GM12878 (cell line): ENCODE measurements at regions of chr3 and their contacts with region 1.

Region 1: DNA sequence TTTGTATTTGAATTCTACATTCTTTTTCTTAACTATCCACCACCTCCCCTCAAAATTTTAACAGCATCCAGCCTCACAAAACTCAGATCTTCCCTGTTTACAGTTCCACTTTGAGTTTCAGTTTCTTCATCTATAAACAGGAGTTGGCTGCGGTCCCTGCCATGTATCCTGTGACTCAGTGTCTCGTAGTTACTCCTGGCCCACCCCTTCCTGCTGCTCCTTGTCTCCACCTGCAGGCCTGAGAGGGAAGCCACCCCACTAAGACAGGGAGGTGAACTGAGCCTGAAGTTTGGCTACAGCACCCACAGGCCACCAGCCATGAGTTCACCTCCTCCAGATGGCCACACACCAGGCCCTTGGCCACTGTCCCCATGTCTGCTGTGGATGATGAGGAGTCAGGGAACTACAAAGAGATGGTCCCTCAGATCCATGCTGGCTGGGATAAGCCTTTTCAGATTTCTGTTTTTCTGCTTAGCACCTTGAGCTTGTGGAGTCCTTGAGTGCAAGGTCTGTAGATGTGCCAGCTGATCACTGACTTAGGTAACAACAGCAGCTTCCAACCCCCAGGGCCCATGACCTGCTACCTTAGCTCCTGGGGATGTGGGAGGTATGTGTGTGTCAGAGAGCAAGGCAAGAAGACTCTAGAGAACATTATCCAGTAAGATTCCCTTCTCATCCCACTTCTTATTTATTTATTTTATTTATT is 37.5 kb downstream of the CD86 start:
- DNase-seq: no peak
- ATAC-seq: peak; percentile 80
- H3K4me3 ChIP-seq: no peak overlapping the region; the same call in 1 of the 2 replicates
- H3K27ac ChIP-seq: peak overlapping the region; percentile 59
- H3K4me1 ChIP-seq: peaks cover 59% of the 10 kb centered on the region
- H3K27me3 ChIP-seq: no peaks in the 10 kb centered on the region
- CTCF ChIP-seq: peak; percentile 60 to 84 (median 80)
- EP300 ChIP-seq: no peak
- POLR2A ChIP-seq: no peak
- RAD21 ChIP-seq: peak; percentile 76

Region 2: DNA sequence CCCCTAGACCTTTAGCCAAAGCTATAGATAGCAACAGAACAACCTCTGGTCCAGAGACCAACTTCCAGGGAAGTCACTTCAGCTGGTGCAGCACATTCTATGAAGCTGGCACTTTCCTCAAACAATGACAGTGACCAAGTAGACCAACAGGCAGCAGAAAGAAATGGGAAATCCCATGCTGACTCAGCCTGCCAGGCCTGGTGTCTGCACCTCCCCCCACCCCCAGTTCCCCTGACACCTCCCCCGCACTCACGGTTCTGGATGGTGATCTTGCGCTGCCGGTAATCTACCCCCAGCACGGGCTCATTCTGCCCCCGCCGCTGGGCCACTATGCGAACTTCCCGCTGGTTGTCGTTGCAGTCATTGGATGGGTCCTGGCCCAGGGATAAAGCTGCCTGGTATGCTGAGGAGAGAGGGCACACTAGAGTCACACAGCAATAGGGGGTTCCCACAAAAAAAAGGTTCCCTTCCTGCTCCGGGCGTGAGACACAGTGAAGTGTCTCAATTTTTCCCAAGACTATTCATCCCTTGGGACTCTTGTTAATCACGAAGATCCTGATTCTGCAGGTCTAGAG is 87.5 kb before region 1 on chr3:
- CTCF ChIA-PET with region 1: interaction called, 6 read pairs
- POLR2A ChIA-PET with region 1: interaction called, 16 read pairs
- RAD21 ChIA-PET with region 1: interaction called, 13 read pairs
- SMC1A ChIA-PET with region 1: interaction called, 882 read pairs
- in situ Hi-C with region 1: no loop called
- intact Hi-C with region 1: no loop called
- DNase-seq: peak; percentile 74
- ATAC-seq: peak; percentile 78
- H3K4me3 ChIP-seq: peak overlapping the region; percentile 46; the same call in 1 of the 2 replicates
- H3K27ac ChIP-seq: peak overlapping the region; percentile 91
- H3K4me1 ChIP-seq: peaks cover 58% of the 10 kb centered on the region
- H3K27me3 ChIP-seq: no peaks in the 10 kb centered on the region
- CTCF ChIP-seq: 0 out of 6 replicates have a peak, but pooled peaks of 1 of the 3 experiments have one; percentile 3
- EP300 ChIP-seq: peak; percentile 11 to 65; a peak in 3 of 4 replicates
- POLR2A ChIP-seq: 0 out of 2 replicates have a peak, but pooled peaks have one; percentile 35
- RAD21 ChIP-seq: no peak

Region 3: GRCh38 chr3:122021811-122022401 is 70.7 kb before region 1 on chr3 and contains the start of gene ILDR1:
- CTCF ChIA-PET with region 1: interaction called, 16 read pairs
- POLR2A ChIA-PET with region 1: interaction called, 13 read pairs
- RAD21 ChIA-PET with region 1: interaction called, 70 read pairs
- SMC1A ChIA-PET with region 1: interaction called, 66 read pairs
- in situ Hi-C with region 1: no loop called
- intact Hi-C with region 1: no loop called
- DNase-seq: no peak
- ATAC-seq: peak; percentile 55
- H3K4me3 ChIP-seq: peak within 1 kb of the TSS; percentile 72
- H3K27ac ChIP-seq: peak within 1 kb of the TSS; percentile 65
- H3K4me1 ChIP-seq: peaks cover 49% of the 10 kb centered on the region
- H3K27me3 ChIP-seq: no peaks in the 10 kb centered on the region
- CTCF ChIP-seq: no peak
- EP300 ChIP-seq: no peak
- POLR2A ChIP-seq: peak; percentile 60; the same call in 1 of the 2 replicates
- RAD21 ChIP-seq: no peak
- polyA plus RNA-seq, gene ILDR1: 1.3 to 1.8 TPM

Region 4: DNA sequence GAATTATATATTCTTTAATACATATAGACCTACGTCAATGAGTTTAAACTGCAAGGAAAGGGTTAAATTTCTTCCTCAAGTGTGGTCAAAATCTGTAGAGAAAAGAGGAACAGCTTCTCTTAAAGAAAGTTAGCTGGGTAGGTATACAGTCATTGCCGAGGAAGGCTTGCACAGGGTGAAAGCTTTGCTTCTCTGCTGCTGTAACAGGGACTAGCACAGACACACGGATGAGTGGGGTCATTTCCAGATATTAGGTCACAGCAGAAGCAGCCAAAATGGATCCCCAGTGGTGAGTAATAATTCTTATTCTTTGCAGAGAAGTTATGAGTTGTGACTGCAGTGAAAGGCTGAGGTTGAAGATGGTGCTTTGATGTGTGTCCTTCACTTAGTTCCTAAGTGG is 37.4 kb before region 1 on chr3 and contains the start of gene CD86:
- CTCF ChIA-PET with region 1: interaction called, 5 read pairs
- POLR2A ChIA-PET with region 1: no interaction called
- RAD21 ChIA-PET with region 1: interaction called, 6 read pairs
- SMC1A ChIA-PET with region 1: interaction called, 394 read pairs
- in situ Hi-C with region 1: no loop called
- intact Hi-C with region 1: no loop called
- DNase-seq: peak; percentile 77
- ATAC-seq: peak; percentile 92
- H3K4me3 ChIP-seq: peak within 1 kb of the TSS; percentile 61
- H3K27ac ChIP-seq: peak within 1 kb of the TSS; percentile 45
- H3K4me1 ChIP-seq: peaks cover 13% of the 10 kb centered on the region
- H3K27me3 ChIP-seq: no peaks in the 10 kb centered on the region
- CTCF ChIP-seq: no peak
- EP300 ChIP-seq: peak in 1 of 2 experiments; percentile 68; a peak in 1 of 4 replicates
- POLR2A ChIP-seq: peak; percentile 79
- RAD21 ChIP-seq: peak; percentile 14; the same call in 1 of the 2 replicates
- polyA plus RNA-seq, gene CD86: 68.0 to 79.5 TPM

Region 5: GRCh38 chr3:122074621-122075265 is 17.9 kb before region 1 on chr3:
- CTCF ChIA-PET with region 1: interaction called, 114 read pairs
- POLR2A ChIA-PET with region 1: interaction called, 165 read pairs
- RAD21 ChIA-PET with region 1: interaction called, 426 read pairs
- SMC1A ChIA-PET with region 1: interaction called, 604 read pairs
- in situ Hi-C with region 1: no loop called
- intact Hi-C with region 1: no loop called
- DNase-seq: peak; percentile 92
- ATAC-seq: peak; percentile 70
- H3K4me3 ChIP-seq: peak overlapping the region; percentile 72
- H3K27ac ChIP-seq: peak overlapping the region; percentile 97
- H3K4me1 ChIP-seq: peaks cover 45% of the 10 kb centered on the region
- H3K27me3 ChIP-seq: no peaks in the 10 kb centered on the region
- CTCF ChIP-seq: no peak
- EP300 ChIP-seq: peak; percentile 65 to 76
- POLR2A ChIP-seq: peak; percentile 73
- RAD21 ChIP-seq: no peak

Region 6: GRCh38 chr3:122233101-122233952 is 140.7 kb after region 1 on chr3:
- CTCF ChIA-PET with region 1: interaction called, 7 read pairs
- POLR2A ChIA-PET with region 1: interaction called, 4 read pairs
- RAD21 ChIA-PET with region 1: interaction called, 9 read pairs
- SMC1A ChIA-PET with region 1: interaction called, 10 read pairs
- in situ Hi-C with region 1: no loop called
- intact Hi-C with region 1: no loop called
- DNase-seq: peak; percentile 86
- ATAC-seq: peak; percentile 83
- H3K4me3 ChIP-seq: 0 out of 2 replicates have a peak overlapping the region, but pooled peaks have one; percentile 13
- H3K27ac ChIP-seq: peak overlapping the region; percentile 86
- H3K4me1 ChIP-seq: peaks cover 38% of the 10 kb centered on the region
- H3K27me3 ChIP-seq: no peaks in the 10 kb centered on the region
- CTCF ChIP-seq: 0 out of 6 replicates have a peak, but pooled peaks of 1 of the 3 experiments have one; percentile 1
- EP300 ChIP-seq: peak; percentile 57 to 68; a peak in 3 of 4 replicates
- POLR2A ChIP-seq: no peak
- RAD21 ChIP-seq: no peak

Region 7: DNA sequence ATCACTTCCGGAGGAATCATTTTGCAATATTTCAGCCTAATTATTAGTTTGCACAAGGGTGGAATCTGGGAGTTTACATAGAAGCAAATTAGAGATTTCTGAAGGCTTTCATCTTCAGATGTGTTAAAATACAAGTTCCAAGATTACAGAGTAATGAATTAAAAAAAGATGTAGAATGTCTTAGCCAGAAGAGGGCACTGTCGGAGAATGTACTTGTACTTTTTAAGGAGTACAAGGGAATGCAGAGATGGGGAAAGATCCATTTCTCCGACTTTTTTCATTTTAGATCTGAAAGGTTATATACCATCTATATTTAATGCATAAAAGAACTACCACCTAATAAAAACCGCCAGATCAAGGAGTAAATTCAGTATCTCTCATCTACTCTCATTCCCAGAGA is 366.4 kb after region 1 on chr3:
- CTCF ChIA-PET with region 1: no interaction called
- POLR2A ChIA-PET with region 1: no interaction called
- RAD21 ChIA-PET with region 1: no interaction called
- SMC1A ChIA-PET with region 1: no interaction called
- in situ Hi-C with region 1: no loop called
- intact Hi-C with region 1: no loop called
- DNase-seq: no peak
- ATAC-seq: 0 out of 3 replicates have a peak, but pooled peaks have one; percentile 30
- H3K4me3 ChIP-seq: no peak overlapping the region
- H3K27ac ChIP-seq: no peak overlapping the region
- H3K4me1 ChIP-seq: no peaks in the 10 kb centered on the region
- H3K27me3 ChIP-seq: no peaks in the 10 kb centered on the region
- CTCF ChIP-seq: peak in 2 of 3 experiments; percentile 15 to 44; a peak in 2 of 6 replicates
- EP300 ChIP-seq: no peak
- POLR2A ChIP-seq: no peak
- RAD21 ChIP-seq: peak; percentile 63